Common myeloid progenitor, CD34-positive (primary cell): ENCODE measurements at regions of chr1 and their contacts with region 1.

Region 1: DNA sequence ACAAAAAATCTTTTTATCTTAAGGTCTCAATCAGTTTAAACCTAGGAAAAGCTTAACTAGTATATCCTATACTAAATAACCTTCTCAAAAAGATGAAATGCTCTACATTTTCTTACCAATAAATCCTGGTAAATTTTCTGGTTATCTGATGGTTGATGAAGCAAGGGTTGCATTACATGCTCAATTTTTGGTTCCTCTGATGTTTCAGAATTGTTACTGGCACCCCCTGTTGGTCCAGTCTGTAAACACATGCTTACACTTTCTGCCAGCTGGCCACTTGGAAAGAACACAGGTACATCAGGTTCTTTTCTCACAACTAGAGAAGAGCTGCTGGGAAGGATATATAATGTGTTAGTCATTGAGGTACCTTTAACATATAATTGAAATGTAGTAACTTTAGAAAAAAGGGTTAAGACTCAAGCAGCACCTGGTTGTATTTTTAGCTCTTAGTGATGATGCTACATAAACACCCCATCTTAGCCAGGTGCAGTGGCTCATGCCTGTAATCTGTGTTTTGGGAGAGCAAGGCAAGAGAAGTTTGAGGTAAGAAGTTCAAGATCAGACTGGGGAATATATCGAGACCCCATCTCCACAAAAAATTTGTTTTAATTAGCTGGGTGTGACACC is 30.9 kb upstream of the TAL1 start:
- DNase-seq: peak; percentile 72 to 85 (median 80)
- H3K4me3 ChIP-seq: no peak overlapping the region
- H3K27ac ChIP-seq: no peak overlapping the region
- H3K4me1 ChIP-seq: peaks cover 0 to 2% (median 0%) of the 10 kb centered on the region in 4 experiments
- H3K27me3 ChIP-seq: no peaks in the 10 kb centered on the region

Region 2: GRCh38 chr1:47179017-47179987 is 83.6 kb before region 1 on chr1:
- CTCF ChIA-PET with region 1: interaction called, 129 read pairs
- POLR2A ChIA-PET with region 1: interaction called, 6 read pairs
- DNase-seq: peak; percentile 89 to 94 (median 91)
- H3K4me3 ChIP-seq: peak overlapping the region; percentile 24 to 84 (median 69)
- H3K27ac ChIP-seq: peak overlapping the region in 1 of 2 experiments; percentile 51
- H3K4me1 ChIP-seq: peaks cover 4 to 57% (median 45%) of the 10 kb centered on the region in 4 experiments
- H3K27me3 ChIP-seq: no peaks in the 10 kb centered on the region

Region 3: DNA sequence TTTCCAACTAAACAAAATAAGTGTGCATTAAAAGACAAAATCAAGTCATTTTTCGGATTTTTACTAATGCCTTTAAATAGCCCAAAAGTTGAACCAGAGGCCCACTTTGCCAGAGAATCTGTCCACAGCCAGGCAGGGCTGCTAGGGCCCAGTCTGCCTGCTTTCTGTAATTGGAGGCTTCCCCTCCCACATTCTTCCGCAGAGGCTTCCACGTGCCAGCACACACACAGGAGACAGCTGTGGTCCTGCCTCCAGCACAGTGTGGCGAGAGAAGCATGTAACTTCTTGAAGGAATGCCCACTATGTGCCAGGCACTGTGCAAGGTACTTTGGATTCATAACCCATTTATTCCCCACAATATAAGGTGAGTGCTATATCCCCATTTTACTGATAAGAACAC is 61.7 kb before region 1 on chr1:
- CTCF ChIA-PET with region 1: interaction called, 29 read pairs
- POLR2A ChIA-PET with region 1: interaction called, 3 read pairs
- DNase-seq: peak in 1 of 3 donors; percentile 49
- H3K4me3 ChIP-seq: no peak overlapping the region
- H3K27ac ChIP-seq: no peak overlapping the region
- H3K4me1 ChIP-seq: peaks cover 0 to 18% (median 3%) of the 10 kb centered on the region in 4 experiments
- H3K27me3 ChIP-seq: no peaks in the 10 kb centered on the region

Region 4: DNA sequence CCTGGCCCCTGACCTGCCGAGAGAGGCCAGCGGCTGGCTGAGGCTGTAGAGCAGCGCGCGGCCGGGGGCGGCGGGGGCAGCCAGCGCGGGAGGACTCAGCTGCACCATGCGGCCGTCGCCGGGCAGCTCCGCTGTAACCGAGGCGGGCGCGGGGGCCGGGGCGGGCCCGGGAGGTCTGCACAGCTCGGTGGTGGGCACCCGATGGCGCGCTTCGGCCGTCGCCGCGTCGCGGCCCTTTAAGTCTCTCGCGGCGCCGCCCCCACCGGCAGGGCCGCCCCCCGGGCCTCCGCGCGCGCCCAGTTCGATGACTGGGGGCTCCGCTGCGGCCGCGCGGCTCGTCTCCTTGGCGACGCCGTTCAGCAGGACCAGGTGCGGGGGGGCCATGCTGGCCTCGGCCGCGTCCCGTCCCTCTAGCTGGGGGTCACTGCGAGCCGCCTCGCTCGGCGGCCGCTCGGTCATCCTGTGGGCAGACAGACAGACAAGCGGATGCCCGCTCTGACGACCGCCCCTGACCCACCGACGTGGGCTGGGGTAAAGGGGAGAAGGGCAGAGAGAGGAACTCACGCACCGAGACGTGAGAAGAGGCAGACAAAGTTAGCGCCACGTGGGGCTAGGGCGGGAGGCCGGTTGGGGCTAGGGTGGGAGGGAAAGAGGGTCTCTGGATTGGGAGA is 37.3 kb before region 1 on chr1:
- CTCF ChIA-PET with region 1: interaction called, 15 read pairs
- POLR2A ChIA-PET with region 1: interaction called, 3 read pairs
- DNase-seq: peak in 2 of 3 donors; percentile 46 to 52
- H3K4me3 ChIP-seq: peak overlapping the region; percentile 25 to 85 (median 67)
- H3K27ac ChIP-seq: peak overlapping the region in 1 of 2 experiments; percentile 97
- H3K4me1 ChIP-seq: peaks cover 0 to 68% (median 57%) of the 10 kb centered on the region in 4 experiments
- H3K27me3 ChIP-seq: no peaks in the 10 kb centered on the region

Region 5: DNA sequence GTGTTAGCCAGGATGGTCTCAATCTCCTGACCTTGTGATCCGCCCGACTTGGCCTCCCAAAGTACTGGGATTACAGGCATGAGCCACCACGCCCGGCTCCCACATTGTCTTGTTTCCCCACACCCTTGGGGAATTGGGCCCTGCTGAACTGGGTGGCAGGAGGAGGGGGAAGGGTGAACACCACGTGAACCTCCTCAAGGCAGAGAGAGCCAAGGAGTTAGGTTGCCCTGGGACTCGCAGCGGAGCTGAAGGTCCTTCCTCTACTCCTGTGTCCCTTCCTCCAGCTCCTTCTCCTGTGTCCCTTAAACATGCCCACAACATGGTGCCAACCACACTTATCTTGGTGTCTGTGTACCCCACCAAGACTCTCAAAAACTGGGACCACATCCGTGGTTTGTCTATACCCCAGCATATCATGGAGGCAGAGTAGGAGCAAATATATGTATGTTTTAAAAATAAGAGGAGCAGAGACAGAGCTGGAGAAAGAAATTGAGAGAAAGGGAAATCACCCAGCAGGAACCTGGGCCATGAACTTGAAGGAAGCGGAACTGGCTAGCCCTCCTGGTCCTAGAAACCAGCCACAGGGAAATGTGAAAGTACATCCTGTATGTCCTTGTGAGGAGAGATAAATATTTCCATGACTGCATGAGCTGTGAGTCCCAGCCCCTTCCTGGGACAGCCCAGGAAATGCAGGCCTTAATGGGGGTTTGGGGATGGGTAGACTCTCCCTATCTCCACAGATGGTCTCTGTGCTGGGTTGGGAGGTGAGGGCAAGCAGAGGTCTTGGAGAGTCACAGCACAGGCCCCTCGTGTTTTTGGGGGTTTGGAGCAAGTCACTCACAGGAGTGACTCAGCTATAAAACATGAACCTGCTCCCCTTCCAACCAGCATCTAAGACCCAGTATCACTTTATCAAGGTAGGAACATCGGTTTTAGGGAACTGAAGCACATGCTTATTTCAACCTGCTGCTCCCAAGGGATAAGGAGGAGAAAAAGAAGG is 21.5 kb before region 1 on chr1:
- CTCF ChIA-PET with region 1: interaction called, 19 read pairs
- POLR2A ChIA-PET with region 1: interaction called, 3 read pairs
- DNase-seq: peak in 2 of 3 donors; percentile 62 to 72
- H3K4me3 ChIP-seq: no peak overlapping the region
- H3K27ac ChIP-seq: no peak overlapping the region
- H3K4me1 ChIP-seq: peaks cover 4 to 38% (median 32%) of the 10 kb centered on the region in 4 experiments
- H3K27me3 ChIP-seq: no peaks in the 10 kb centered on the region

Region 6: GRCh38 chr1:47508702-47509431 is 246.0 kb after region 1 on chr1:
- CTCF ChIA-PET with region 1: no interaction called
- POLR2A ChIA-PET with region 1: no interaction called
- DNase-seq: peak in 2 of 3 donors; percentile 46 to 50
- H3K4me3 ChIP-seq: peak overlapping the region in 5 of 7 experiments; percentile 27 to 76 (median 63)
- H3K27ac ChIP-seq: no peak overlapping the region
- H3K4me1 ChIP-seq: peaks cover 0 to 18% (median 13%) of the 10 kb centered on the region in 4 experiments
- H3K27me3 ChIP-seq: peaks cover 15 to 57% (median 41%) of the 10 kb centered on the region in 5 experiments